Caco-2 (cell line): ENCODE measurements at regions of chr15 and their contacts with region 1.

Region 1: GRCh38 chr15:46080016-46080415 is 445.2 kb downstream of the SQOR start:
- DNase-seq: no peak
- H3K4me3 ChIP-seq: no peak overlapping the region
- H3K4me3 Mint-ChIP-seq: no peak overlapping the region
- H3K27ac Mint-ChIP-seq: no peak overlapping the region
- H3K4me1 ChIP-seq: no peaks in the 10 kb centered on the region
- H3K4me1 Mint-ChIP-seq: no peaks in the 10 kb centered on the region
- H3K27me3 ChIP-seq: no peaks in the 10 kb centered on the region
- H3K27me3 Mint-ChIP-seq: peaks cover 5% of the 10 kb centered on the region
- CTCF ChIP-seq: no peak

Region 2: DNA sequence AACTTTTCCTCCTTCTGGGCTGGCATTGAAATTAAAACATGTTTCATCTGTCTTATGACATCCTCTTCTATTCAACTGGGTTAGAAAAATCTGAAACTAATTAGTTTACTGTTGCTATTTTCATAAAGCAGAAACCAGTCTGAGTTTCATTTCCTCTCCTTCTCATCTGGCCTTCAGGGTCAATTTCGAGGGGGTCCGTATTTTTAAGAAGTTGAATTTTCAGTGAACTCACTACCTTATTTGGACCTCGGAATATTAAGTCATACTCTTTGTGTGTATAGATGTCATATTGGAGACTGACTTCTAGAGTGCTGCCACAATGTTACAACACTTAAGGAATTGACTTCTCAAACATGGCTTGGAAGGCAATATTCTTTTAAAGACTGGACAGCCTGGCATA is 40.7 kb after region 1 on chr15:
- CTCF ChIA-PET with region 1: no interaction called
- POLR2A ChIA-PET with region 1: no interaction called
- intact Hi-C with region 1: loop called (anchors 2 kb)
- DNase-seq: no peak
- H3K4me3 ChIP-seq: no peak overlapping the region
- H3K4me3 Mint-ChIP-seq: no peak overlapping the region
- H3K27ac Mint-ChIP-seq: no peak overlapping the region
- H3K4me1 ChIP-seq: no peaks in the 10 kb centered on the region
- H3K4me1 Mint-ChIP-seq: no peaks in the 10 kb centered on the region
- H3K27me3 ChIP-seq: no peaks in the 10 kb centered on the region
- H3K27me3 Mint-ChIP-seq: no peaks in the 10 kb centered on the region
- CTCF ChIP-seq: no peak

Region 3: DNA sequence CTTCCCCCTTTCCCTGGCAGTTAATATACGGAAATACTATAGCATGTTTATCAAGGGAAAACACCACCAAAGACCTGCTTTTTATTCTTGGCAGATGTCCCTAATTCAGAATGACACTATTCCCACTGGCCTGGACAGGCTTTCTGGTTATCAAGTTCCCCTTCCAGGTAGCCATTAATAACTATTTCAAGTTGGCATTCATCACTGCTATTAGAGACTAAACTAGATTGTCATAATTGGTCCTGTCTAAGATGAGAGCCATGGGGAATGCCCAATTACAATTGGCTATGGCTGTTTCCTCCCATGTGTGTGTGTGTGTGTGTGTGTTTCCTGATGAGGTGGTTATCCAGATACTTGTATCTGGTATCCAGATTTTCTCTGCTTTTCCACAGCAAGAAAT is 162.9 kb after region 1 on chr15:
- CTCF ChIA-PET with region 1: no interaction called
- POLR2A ChIA-PET with region 1: no interaction called
- intact Hi-C with region 1: no loop called
- DNase-seq: no peak
- H3K4me3 ChIP-seq: no peak overlapping the region
- H3K4me3 Mint-ChIP-seq: no peak overlapping the region
- H3K27ac Mint-ChIP-seq: no peak overlapping the region
- H3K4me1 ChIP-seq: no peaks in the 10 kb centered on the region
- H3K4me1 Mint-ChIP-seq: no peaks in the 10 kb centered on the region
- H3K27me3 ChIP-seq: no peaks in the 10 kb centered on the region
- H3K27me3 Mint-ChIP-seq: peaks cover 11% of the 10 kb centered on the region
- CTCF ChIP-seq: no peak